BJ (cell line): ENCODE measurements at regions of chr4 and their contacts with region 1.

Region 1: DNA sequence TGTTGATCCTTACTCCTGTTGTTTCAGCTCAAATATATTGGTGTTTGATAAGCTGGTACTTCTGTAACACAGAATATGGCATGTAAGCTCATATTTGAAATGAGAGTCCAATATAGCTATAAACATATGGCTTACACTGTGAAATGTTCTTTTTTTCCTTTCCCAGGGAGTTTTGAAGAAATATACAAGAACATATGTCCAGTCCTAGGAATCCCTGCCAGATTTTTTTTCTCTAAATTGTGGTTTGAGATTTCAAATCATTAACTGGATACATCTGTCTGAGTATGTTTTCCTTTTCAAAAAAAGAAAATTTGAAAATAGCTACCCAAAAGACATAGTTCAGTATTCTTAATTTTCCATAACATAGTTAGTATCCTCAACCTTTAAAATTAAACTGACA is 60.2 kb downstream of the HMGB2 start:
- DNase-seq: no peak
- H3K4me3 ChIP-seq: no peak overlapping the region
- H3K27me3 ChIP-seq: no peaks in the 10 kb centered on the region
- CTCF ChIP-seq: no peak

Region 2: DNA sequence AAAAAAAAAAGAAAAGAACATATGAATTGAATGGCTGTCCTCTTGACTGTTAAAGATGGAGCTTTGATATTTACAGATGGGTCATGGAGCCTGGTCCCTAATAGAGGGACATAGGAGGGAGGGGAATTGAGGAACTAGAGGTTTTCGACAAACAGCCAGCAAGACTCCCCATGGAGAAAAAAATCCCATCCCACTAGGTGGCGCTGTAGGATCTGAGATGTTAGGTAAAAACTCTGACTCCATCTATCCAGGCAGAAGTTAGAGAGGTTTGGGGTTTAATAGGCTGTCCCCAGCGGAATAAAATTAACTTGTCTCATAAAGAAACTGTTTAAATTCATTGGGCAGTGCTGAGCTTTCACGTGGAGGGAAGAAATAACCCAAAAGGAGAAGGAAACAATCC is 14.4 kb after region 1 on chr4:
- CTCF ChIA-PET with region 1: interaction called, 11 read pairs
- POLR2A ChIA-PET with region 1: no interaction called
- DNase-seq: no peak
- H3K4me3 ChIP-seq: no peak overlapping the region
- H3K27me3 ChIP-seq: no peaks in the 10 kb centered on the region
- CTCF ChIP-seq: peak; percentile 60